ENCODE measurements at regions of chr3 and their contacts with region 1.

Region 1: DNA sequence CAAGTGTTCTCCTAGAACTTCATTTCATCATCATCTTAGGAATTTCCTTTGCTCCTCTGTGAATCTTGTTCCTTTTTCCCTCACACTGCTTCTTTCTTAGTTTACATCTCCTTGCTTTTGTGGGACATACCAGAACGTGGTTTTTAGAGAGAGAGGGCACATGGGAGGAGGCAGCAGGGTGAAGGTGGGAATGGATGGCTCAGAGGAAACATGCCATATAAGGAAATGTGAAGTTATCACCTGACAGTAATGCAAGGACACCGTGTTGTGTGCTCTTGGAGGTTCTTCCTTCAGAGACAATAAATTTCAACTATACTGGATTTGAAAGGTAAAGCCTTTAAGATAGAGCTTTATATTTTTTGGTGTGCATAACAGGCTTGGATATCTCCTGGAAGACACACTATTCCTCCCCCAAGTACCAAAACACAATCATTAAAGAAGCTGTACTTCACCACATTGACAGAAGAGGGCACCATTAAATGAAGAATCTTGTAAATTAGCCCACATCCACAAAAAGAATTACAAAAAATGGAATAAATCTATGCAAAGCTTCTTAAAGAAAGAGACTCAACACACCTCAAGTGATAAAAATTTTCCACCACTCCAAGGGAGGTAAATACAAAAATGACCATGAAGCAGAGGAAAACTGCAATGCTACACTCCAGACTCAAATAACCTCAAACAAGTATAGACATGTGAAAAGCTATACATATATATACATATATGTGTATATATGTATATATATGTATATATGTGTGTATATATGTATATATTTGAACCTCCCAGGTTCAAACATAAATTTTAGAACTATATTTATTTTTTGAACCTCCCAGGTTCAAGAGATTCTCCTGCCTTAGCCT is 26.1 kb downstream of the RPL39L start:
- DNase-seq: no peak

Region 2: GRCh38 chr3:186854954-186855353 is 258.2 kb before region 1 on chr3:
- CTCF ChIA-PET with region 1: no interaction called
- POLR2A ChIA-PET with region 1: no interaction called
- DNase-seq: no peak

Region 3: DNA sequence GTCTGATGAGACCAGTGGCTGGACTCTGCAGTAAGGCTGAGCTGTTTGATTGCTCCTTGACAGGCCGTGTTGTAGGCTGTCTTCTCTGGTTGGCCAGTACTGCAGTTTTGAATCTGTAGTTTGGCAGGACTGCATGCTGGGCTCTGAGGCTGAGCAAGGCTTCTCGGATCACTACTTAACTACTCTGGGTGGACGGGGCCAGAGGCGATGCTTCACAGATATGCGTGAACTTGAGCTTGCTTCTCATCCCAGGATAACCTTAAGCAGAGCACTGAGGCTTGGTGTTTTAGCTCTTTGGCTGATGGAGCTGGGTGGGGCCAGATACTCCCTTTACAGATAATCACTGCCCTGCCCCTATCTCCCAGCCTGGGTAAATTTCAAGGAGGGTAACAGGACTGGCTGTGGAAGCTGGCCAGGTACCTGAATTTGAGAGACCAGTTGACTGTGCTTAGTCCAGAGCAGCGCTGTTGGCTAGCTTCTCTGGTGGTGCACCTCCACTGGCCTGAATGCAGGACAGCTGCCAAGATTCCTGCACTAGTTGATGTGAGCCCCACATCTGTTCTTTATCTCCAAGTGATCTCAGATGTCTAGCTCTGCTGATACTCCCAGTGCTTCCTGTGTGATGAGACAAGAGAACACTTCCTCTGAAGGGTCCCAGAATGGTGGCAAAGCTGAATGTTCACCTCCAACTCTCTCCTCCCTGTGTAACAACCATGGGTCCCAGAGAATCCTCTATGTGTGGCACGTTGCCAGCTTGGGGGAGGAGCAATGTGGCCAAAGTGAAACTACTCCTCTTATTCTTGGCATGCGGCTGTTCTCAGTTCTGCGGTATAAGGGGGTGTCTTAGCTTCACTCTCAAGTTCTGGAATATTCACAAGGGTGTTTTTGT is 11.7 kb before region 1 on chr3:
- CTCF ChIA-PET with region 1: interaction called, 14 read pairs
- POLR2A ChIA-PET with region 1: no interaction called
- DNase-seq: peak; percentile 10

Region 4: DNA sequence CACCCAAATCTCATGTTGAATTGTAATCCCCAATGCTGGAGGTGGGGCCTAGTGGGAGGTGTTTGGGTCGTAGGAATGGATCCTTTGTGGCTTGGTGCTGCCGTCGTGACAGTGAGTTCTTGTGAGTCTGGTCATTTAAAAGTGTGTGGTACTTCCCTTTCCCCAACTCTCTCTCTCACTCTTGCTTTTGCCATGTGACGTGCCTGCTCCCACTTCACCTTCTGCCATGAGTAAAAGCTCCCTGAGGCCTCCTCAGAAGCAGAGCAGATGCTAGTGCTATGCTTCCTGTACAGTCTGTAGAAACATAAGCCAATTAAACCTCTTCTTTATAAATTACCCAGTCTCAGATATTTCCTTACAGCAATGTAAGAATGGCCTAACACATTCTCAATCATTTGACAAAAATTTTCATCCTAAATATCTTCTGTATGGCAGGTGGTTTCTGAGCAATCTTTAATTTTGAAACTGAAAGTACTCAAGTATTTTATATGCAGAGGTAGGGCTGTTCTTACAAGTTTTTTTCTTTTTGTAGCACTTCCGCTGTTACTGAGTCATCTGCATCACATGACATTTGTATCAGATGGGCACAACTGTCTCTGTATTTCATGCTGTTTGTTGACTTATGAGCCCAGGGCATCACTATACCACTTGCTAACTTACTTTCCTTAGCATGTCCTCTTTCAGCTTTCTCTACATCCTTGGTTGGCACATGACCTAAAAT is 17.3 kb after region 1 on chr3:
- CTCF ChIA-PET with region 1: no interaction called
- POLR2A ChIA-PET with region 1: no interaction called
- DNase-seq: no peak

Region 5: DNA sequence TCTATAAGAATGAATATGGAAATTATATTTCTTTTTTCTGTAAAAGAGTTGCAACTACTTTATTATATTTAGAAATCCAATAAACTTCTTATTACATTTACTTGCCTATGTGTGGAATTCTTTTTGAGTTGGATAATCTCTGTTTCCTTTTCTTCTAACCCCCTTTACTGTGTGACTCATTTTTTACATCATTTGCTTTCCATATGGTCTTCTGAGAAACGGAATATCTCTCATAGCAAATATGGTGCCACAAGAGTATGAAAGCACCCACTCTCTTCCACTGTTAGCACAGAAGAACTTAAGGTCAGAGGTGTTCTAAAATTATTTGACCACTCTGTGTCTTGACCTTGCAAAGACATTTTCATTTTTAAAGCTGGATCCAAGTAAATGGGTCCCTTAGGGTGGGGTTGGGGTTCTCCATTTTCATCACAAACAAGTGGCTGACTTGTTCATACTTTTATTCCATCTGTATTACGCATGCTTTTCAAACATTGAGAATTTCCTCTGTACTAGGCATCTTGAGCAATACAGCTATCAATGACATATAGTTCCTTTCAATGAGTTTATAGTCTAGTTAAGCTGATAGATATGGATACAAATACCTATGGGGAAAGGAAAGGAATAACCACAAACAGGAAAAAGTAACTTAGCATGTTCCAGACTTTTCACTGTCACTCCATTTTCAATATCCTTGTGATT is 1777.6 kb after region 1 on chr3:
- CTCF ChIA-PET with region 1: no interaction called
- POLR2A ChIA-PET with region 1: no interaction called
- DNase-seq: no peak

Measured in HEK293T (cell line).